Astrocyte of the cerebellum (primary cell): ENCODE measurements at regions of chr6 and their contacts with region 1.

Region 1: GRCh38 chr6:164185471-164185871 is 771.0 kb downstream of the QKI start:
- DNase-seq: no peak
- H3K4me3 ChIP-seq: no peak overlapping the region
- CTCF ChIP-seq: no peak

Region 2: DNA sequence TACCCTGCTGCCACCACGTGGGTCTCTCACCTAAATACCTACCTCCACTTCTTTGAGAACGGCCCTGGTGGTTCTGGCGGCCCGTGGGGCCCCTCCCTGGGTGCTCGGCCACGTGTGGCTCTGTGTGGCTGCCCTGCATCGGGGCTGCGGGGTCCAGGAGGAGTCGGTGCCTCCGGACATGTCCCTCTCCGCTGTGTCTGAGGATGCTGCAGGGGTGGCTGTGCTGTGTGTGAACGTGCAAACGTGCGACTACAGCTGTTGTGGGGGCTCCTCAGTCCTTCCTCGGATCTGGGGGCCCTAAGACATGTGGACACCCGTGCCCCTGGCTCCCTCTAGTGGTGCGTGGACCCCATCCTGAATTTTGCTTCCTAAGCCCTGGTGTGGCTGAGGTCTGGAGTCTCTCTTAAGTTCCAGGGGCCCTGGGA is 79.1 kb before region 1 on chr6:
- in situ Hi-C with region 1: no loop called
- DNase-seq: no peak
- H3K4me3 ChIP-seq: no peak overlapping the region
- CTCF ChIP-seq: peak; percentile 66

Region 3: GRCh38 chr6:164122109-164122508 is 63.4 kb before region 1 on chr6:
- in situ Hi-C with region 1: no loop called
- DNase-seq: no peak
- H3K4me3 ChIP-seq: no peak overlapping the region
- CTCF ChIP-seq: no peak

Region 4: DNA sequence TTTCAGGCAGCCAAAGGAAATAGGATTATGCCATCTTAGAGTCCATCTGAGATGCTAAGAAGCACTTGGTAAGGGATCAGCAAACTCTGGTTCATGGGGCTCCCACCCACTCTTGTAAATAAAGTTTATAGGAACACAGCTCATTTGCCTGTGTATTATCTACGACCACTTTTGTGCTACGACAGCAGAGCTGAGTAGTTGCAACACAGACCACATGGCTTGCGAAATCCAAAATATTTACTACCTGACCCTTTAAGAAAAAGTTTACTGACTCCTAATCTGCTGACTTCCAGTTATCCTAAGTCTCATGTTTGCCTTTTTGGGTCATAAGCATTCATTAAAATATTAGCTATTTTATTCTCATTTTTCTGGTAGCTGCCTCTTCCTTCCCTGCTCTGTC is 88.0 kb after region 1 on chr6:
- in situ Hi-C with region 1: loop called (anchors 5 kb)
- DNase-seq: no peak
- H3K4me3 ChIP-seq: no peak overlapping the region
- CTCF ChIP-seq: no peak